Activated CD4-positive, alpha-beta memory T cell treated with anti-CD3 and anti-CD28 coated beads for 36 hours (primary cell): ENCODE measurements at regions of chr15 and their contacts with region 1.

Region 1: GRCh38 chr15:74615508-74616365 is at the start of gene CLK3:
- DNase-seq: peak; percentile 97
- H3K4me3 Mint-ChIP-seq: peak within 1 kb of the TSS; percentile 91
- H3K27ac Mint-ChIP-seq: peak within 1 kb of the TSS; percentile 94
- H3K4me1 Mint-ChIP-seq: peaks cover 35% of the 10 kb centered on the region
- H3K27me3 Mint-ChIP-seq: no peaks in the 10 kb centered on the region
- total RNA-seq, gene CLK3: 118 to 124 TPM

Region 2: GRCh38 chr15:74545880-74546656 is 69.7 kb before region 1 on chr15:
- CTCF ChIA-PET with region 1: interaction called, 8 read pairs
- POLR2A ChIA-PET with region 1: interaction called, 33 read pairs
- intact Hi-C with region 1: loop called (anchors 1 kb)
- DNase-seq: peak; percentile 99
- H3K4me3 Mint-ChIP-seq: peak overlapping the region; percentile 49
- H3K27ac Mint-ChIP-seq: peak overlapping the region; percentile 62
- H3K4me1 Mint-ChIP-seq: peaks cover 74% of the 10 kb centered on the region
- H3K27me3 Mint-ChIP-seq: no peaks in the 10 kb centered on the region

Region 3: DNA sequence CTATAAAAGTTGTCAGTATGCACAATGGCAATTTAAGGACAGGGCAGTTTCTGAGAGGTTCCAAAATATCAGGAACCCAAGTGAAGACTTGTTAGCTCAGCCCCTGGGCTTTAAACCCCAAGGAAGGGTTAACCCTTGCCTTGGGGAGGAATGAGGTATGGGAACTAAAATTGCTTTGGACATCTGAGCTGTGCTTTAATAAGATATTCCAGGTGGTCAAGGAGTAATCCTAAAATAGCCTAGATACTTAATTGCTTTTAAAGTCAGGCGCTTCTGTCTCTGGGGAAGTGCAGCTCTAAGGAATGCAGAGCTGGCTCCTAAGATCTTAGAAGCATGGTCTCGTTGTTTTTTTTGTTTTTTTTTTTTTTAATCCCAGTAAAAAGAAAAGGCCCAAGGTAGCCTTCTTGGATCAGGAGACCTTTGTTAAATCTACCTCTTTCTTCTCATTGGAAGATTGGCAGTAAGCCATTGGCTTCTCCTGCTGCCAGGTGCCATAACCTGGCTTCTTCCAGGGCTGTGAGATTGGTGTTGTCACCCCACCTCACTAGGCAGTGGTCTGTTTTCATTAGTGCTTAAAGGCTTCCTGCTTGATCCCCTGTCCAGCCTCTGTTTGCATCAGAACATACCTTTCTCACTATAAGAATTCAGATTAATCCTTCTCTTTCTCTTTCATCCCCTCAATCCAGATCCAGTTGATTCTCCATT is 50.2 kb before region 1 on chr15:
- CTCF ChIA-PET with region 1: no interaction called
- POLR2A ChIA-PET with region 1: no interaction called
- intact Hi-C with region 1: no loop called
- DNase-seq: no peak
- H3K4me3 Mint-ChIP-seq: no peak overlapping the region
- H3K27ac Mint-ChIP-seq: no peak overlapping the region
- H3K4me1 Mint-ChIP-seq: peaks cover 24% of the 10 kb centered on the region
- H3K27me3 Mint-ChIP-seq: no peaks in the 10 kb centered on the region

Region 4: GRCh38 chr15:74598126-74598842 is 17.5 kb before region 1 on chr15:
- CTCF ChIA-PET with region 1: interaction called, 7 read pairs
- POLR2A ChIA-PET with region 1: interaction called, 15 read pairs
- intact Hi-C with region 1: no loop called
- DNase-seq: peak; percentile 95
- H3K4me3 Mint-ChIP-seq: peak overlapping the region; percentile 96
- H3K27ac Mint-ChIP-seq: peak overlapping the region; percentile 94
- H3K4me1 Mint-ChIP-seq: peaks cover 20% of the 10 kb centered on the region
- H3K27me3 Mint-ChIP-seq: no peaks in the 10 kb centered on the region